ENCODE measurements at regions of chr13 and their contacts with region 1.

Region 1: DNA sequence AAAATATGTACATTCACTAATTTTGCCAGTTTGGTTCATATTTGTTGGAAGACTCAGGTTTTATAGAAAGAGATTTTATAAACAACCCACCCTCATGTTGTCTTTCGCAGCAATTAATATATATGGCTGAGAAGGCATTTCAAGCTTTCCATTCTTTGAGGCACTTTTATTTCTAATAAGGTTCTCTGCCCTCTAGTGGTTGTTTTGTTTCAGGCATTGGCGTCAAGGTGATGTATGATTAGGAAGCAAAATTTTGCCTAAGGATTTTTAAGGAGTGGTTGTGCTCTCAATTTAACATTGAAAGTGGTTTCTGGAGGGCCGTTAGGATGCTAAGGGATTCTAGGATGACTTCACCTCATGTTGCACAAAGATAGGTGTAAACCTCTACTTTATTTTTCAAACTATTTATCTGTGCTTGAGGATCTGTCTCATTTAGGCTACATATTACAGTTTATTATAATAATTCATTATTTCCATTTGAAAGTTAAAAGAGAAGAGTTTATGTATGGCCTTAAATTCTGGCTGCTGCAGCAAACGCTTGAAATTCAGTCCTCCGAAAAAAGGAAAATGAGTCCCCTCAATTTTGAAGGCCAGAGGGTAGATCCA is 35.9 kb downstream of the OXGR1 start:
- DNase-seq: no peak
- ATAC-seq: no peak
- H3K4me3 ChIP-seq: no peak overlapping the region
- H3K27ac ChIP-seq: no peak overlapping the region
- H3K4me1 ChIP-seq: no peaks in the 10 kb centered on the region
- H3K27me3 ChIP-seq: no peaks in the 10 kb centered on the region

Region 2: DNA sequence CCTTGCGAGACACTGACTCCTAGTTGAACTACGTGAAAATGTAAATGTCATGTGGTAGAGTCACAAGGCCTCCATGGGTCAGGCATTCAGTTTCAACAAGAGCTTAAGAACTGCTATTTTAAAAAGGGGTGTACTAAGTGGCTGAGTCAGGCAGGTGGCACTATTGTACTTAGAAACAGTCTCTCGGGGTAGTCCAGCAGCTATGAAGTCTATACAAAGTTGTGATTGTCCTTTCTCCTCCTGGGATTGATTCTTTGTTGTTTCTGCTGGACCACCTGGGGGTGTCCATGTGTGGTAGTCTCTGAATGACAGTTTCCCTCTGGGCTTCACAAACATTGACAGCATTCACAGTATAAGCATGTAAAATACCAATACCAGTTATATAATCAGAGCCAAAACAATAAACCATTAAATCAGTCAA is 938.2 kb before region 1 on chr13:
- intact Hi-C with region 1: loop called in 2 of 4 experiments (anchors 10 kb)
- DNase-seq: no peak
- ATAC-seq: peak; percentile 84 to 88
- H3K4me3 ChIP-seq: no peak overlapping the region
- H3K27ac ChIP-seq: no peak overlapping the region
- H3K4me1 ChIP-seq: no peaks in the 10 kb centered on the region
- H3K27me3 ChIP-seq: no peaks in the 10 kb centered on the region

Region 3: GRCh38 chr13:96871469-96871868 is 86.9 kb before region 1 on chr13:
- intact Hi-C with region 1: no loop called
- DNase-seq: no peak
- ATAC-seq: no peak
- H3K4me3 ChIP-seq: no peak overlapping the region
- H3K27ac ChIP-seq: no peak overlapping the region
- H3K4me1 ChIP-seq: no peaks in the 10 kb centered on the region
- H3K27me3 ChIP-seq: no peaks in the 10 kb centered on the region

Measured in right cardiac atrium (tissue), 5 donors.